Right ventricle myocardium superior (tissue), 1 donor: ENCODE measurements at regions of chr17 and their contacts with region 1.

Region 1: GRCh38 chr17:31690151-31690551 is 168.9 kb downstream of the COPRS start:
- DNase-seq: no peak
- ATAC-seq: no peak

Region 2: GRCh38 chr17:31558748-31559644 is 131.2 kb before region 1 on chr17:
- intact Hi-C with region 1: loop called (anchors 5 kb)
- DNase-seq: peak; percentile 87
- ATAC-seq: peak; percentile 93